Posterior cingulate gyrus (tissue), 11 donors: ENCODE measurements at regions of chr4 and their contacts with region 1.

Region 1: DNA sequence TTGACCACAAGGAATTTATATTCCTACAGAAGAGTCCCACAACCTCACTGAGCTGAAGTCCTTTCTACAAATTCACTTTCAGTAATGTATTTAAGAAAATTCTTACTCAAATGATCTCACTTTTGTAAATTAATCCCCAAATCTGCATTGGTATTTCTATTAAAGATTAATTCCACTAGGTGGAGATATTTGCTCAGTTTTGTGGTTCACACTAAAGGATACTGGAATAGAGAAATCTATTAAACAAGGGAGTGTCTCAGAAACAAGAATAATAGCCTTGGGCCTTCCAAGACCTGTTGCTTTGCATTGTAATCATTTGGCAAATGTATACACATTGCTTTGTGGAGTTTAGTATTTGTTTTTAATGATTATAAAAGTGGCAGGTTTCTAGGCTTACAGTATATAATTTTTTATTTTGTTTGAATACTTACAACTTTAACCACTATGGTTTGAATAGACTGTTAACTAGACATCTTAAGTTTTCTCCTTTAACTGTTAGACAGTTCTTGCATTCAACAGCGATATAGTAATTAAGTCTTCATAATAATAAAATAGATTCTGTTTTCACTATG is 25.9 kb downstream of the CFAP299 start:
- DNase-seq: no peak

Region 2: GRCh38 chr4:80989921-80990544 is 628.6 kb after region 1 on chr4:
- intact Hi-C with region 1: loop called (anchors 1 kb)
- DNase-seq: no peak

Region 3: GRCh38 chr4:81040012-81040659 is 678.7 kb after region 1 on chr4:
- intact Hi-C with region 1: loop called (anchors 1 kb)
- DNase-seq: no peak